ENCODE measurements at regions of chr2 and their contacts with region 1.

Region 1: DNA sequence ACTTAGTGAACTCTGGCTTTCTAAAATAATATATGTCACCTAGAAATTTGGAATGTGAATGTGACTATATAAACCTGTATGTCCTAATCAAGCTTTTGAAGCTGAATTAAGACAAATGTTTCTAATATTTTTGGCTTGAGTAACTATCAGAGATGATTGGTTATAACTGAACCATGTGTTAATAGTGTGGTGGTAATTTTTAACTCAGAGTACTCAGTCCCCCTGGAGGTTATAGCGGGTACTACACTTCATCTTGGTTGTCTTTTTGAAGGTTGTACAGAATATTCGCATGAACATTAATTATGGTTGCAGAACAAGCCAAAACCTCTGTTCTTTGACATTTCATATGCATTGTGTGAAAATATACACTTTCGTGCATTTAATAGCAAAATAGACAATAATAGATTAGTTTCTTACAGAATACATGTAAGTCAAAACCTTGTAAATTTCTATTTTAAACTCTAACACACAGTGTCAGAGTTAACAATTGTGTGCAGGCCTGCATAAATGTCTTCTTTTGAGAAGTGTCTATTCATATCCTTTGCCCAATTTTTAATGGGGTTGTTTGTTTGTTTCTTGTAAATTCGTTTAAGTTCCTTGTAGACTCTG is 86.0 kb downstream of the OSBPL6 start:
- DNase-seq: peak in 1 of 5 donors; percentile 24
- H3K4me3 ChIP-seq: no peak overlapping the region
- H3K27ac ChIP-seq: no peak overlapping the region
- H3K4me1 ChIP-seq: peaks cover 2% of the 10 kb centered on the region
- H3K27me3 ChIP-seq: no peaks in the 10 kb centered on the region
- CTCF ChIP-seq: peak in 2 of 3 donors; percentile 45 to 54
- EP300 ChIP-seq: no peak
- POLR2A ChIP-seq: no peak

Region 2: DNA sequence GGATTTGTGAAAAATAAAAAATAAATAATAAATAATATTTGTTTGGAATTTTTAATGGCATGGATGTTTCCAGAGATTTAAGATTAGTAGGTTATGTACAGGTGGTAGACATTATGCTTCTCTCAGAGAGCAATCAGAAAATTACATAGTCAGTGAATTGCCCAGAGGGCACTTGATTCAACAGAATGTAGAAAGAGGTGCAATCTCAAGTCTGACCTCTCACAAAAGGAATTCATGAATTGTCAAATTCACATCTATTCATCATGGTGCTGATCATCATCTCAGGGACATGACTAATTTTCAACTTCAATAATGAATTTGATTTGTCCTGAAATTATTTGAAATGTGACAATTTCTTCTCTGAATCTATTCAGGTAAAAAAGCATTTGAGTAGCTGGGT is 380.3 kb before region 1 on chr2:
- intact Hi-C with region 1: no loop called
- DNase-seq: no peak
- H3K4me3 ChIP-seq: no peak overlapping the region
- H3K27ac ChIP-seq: no peak overlapping the region
- H3K4me1 ChIP-seq: no peaks in the 10 kb centered on the region
- H3K27me3 ChIP-seq: no peaks in the 10 kb centered on the region
- CTCF ChIP-seq: no peak
- EP300 ChIP-seq: no peak
- POLR2A ChIP-seq: no peak

Region 3: GRCh38 chr2:178128836-178129630 is 151.3 kb before region 1 on chr2:
- intact Hi-C with region 1: loop called in 3 of 4 experiments (anchors 5 to 10 kb)
- DNase-seq: no peak
- H3K4me3 ChIP-seq: no peak overlapping the region
- H3K27ac ChIP-seq: no peak overlapping the region
- H3K4me1 ChIP-seq: peaks cover 1% of the 10 kb centered on the region
- H3K27me3 ChIP-seq: no peaks in the 10 kb centered on the region
- CTCF ChIP-seq: no peak
- EP300 ChIP-seq: no peak
- POLR2A ChIP-seq: no peak

Region 4: GRCh38 chr2:178136321-178137025 is 143.9 kb before region 1 on chr2:
- intact Hi-C with region 1: loop called in 3 of 4 experiments (anchors 5 to 10 kb)
- DNase-seq: no peak
- H3K4me3 ChIP-seq: no peak overlapping the region
- H3K27ac ChIP-seq: no peak overlapping the region
- H3K4me1 ChIP-seq: no peaks in the 10 kb centered on the region
- H3K27me3 ChIP-seq: no peaks in the 10 kb centered on the region
- CTCF ChIP-seq: no peak
- EP300 ChIP-seq: no peak
- POLR2A ChIP-seq: no peak

Region 5: DNA sequence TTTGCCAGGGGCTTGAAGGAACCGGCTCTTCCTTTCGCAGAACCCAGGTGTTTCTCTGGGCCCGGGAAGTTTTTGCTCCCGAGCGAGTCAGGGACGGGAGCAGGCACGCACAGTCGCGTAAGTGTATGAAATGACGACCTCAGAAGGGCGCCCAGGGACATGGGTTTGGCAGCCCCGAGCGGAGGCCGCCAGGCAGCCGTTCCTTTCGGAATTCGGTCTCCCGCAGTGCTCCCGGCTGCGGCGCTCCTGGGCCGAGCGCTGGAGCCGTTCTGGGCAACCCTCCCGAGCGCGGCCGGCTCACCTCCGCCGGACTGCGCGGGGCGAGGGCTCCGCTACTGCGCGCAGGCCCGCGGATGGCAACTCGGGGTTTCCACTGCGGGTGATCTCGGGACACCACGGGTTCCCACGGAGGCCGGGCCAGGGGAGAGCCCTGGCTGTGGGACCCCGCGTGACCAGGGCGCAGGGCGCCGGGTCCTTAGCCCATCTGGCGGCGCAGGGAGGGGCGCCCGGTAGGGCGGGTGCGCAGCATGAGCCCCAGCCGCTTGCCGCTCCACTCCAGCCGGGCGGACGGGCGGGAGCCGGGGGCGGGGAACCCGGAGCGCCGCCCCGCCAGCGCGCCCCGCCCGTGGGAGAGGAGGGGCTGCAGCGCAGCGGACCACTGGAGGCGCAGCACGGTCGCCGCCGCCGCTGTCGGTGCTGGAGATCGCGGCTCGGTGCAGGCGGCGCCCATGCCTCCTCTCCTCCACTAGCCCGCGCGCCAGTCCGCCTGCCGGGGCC is 86.3 kb before region 1 on chr2 and contains the start of gene OSBPL6:
- intact Hi-C with region 1: loop called in 1 of 4 experiments (anchors 10 kb)
- DNase-seq: peak; percentile 69 to 84 (median 79)
- H3K4me3 ChIP-seq: peak within 1 kb of the TSS; percentile 51
- H3K27ac ChIP-seq: peak within 1 kb of the TSS; percentile 57 to 84
- H3K4me1 ChIP-seq: no peaks in the 10 kb centered on the region
- H3K27me3 ChIP-seq: no peaks in the 10 kb centered on the region
- CTCF ChIP-seq: peak; percentile 8 to 57 (median 49)
- EP300 ChIP-seq: no peak
- POLR2A ChIP-seq: peak; percentile 77
- total RNA-seq, gene OSBPL6: 0.60 to 5.2 (median 1.7) TPM

Region 6: GRCh38 chr2:178251151-178251955 is 29.0 kb before region 1 on chr2:
- intact Hi-C with region 1: no loop called
- DNase-seq: no peak
- H3K4me3 ChIP-seq: no peak overlapping the region
- H3K27ac ChIP-seq: no peak overlapping the region
- H3K4me1 ChIP-seq: no peaks in the 10 kb centered on the region
- H3K27me3 ChIP-seq: no peaks in the 10 kb centered on the region
- CTCF ChIP-seq: no peak
- EP300 ChIP-seq: no peak
- POLR2A ChIP-seq: no peak

Region 7: GRCh38 chr2:178478439-178479274 is 198.3 kb after region 1 on chr2 and contains the start of gene FKBP7:
- intact Hi-C with region 1: no loop called
- DNase-seq: peak; percentile 88 to 93 (median 91)
- H3K4me3 ChIP-seq: peak within 1 kb of the TSS; percentile 92
- H3K27ac ChIP-seq: peak within 1 kb of the TSS; percentile 86 to 91
- H3K4me1 ChIP-seq: peaks cover 9% of the 10 kb centered on the region
- H3K27me3 ChIP-seq: no peaks in the 10 kb centered on the region
- CTCF ChIP-seq: peak in 1 of 3 donors; percentile 48
- EP300 ChIP-seq: peak; percentile 70
- POLR2A ChIP-seq: peak; percentile 90
- total RNA-seq, gene FKBP7: 31.6 to 69.4 (median 43.3) TPM

Region 8: DNA sequence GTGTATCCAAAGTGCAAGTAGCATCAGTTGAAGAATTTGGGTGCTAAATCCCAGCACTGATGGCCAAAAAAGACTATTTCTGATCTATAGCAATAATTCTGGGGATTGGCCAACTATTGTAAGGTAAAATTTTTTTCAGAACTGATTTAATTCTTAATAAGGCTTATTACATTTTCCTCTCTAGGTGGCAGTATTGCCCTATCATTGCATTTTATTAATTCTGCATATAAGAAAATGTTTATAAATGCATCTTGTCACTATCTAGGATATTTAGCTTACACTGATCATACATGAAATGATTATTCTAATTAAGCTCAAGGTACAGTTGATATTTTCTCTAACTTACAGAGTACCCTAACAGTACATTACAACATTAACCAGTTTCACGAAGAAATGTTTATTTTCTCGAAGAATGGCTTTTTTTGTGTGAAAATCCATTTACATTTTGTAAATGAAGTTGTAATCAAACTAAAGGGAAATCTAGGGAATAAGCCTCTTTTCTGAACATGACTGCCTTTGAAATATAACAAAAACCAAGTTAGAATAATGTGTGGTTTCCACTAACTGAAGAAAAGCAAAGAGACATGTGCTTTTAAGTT is 515.8 kb after region 1 on chr2:
- intact Hi-C with region 1: no loop called
- DNase-seq: no peak
- H3K4me3 ChIP-seq: no peak overlapping the region
- H3K27ac ChIP-seq: no peak overlapping the region
- H3K4me1 ChIP-seq: no peaks in the 10 kb centered on the region
- H3K27me3 ChIP-seq: no peaks in the 10 kb centered on the region
- CTCF ChIP-seq: peak; percentile 45 to 69 (median 45)
- EP300 ChIP-seq: no peak
- POLR2A ChIP-seq: no peak